IMR-90 (cell line): ENCODE measurements at regions of chr14 and their contacts with region 1.

Region 1: GRCh38 chr14:104078031-104078455 is 7.5 kb upstream of the ASPG start:
- DNase-seq: peak; percentile 80
- ATAC-seq: peak; percentile 100
- H3K4me3 ChIP-seq: no peak overlapping the region
- H3K27ac ChIP-seq: no peak overlapping the region
- H3K4me1 ChIP-seq: no peaks in the 10 kb centered on the region
- H3K27me3 ChIP-seq: no peaks in the 10 kb centered on the region
- CTCF ChIP-seq: peak; percentile 100
- POLR2A ChIP-seq: no peak
- RAD21 ChIP-seq: peak; percentile 79

Region 2: GRCh38 chr14:103808403-103809001 is 269.5 kb before region 1 on chr14:
- CTCF ChIA-PET with region 1: no interaction called
- POLR2A ChIA-PET with region 1: no interaction called
- dilution Hi-C with region 1: no loop called
- in situ Hi-C with region 1: no loop called
- intact Hi-C with region 1: loop called (anchors 10 kb)
- DNase-seq: peak; percentile 65
- ATAC-seq: peak; percentile 91
- H3K4me3 ChIP-seq: no peak overlapping the region
- H3K27ac ChIP-seq: no peak overlapping the region
- H3K4me1 ChIP-seq: peaks cover 2% of the 10 kb centered on the region; the same call in 1 of the 2 replicates
- H3K27me3 ChIP-seq: no peaks in the 10 kb centered on the region
- CTCF ChIP-seq: peak; percentile 80
- POLR2A ChIP-seq: 0 out of 2 replicates have a peak, but pooled peaks have one; percentile 32
- RAD21 ChIP-seq: peak; percentile 86

Region 3: GRCh38 chr14:103832046-103832445 is 246.0 kb before region 1 on chr14:
- CTCF ChIA-PET with region 1: interaction called, 5 read pairs
- POLR2A ChIA-PET with region 1: interaction called, 12 read pairs
- dilution Hi-C with region 1: no loop called
- in situ Hi-C with region 1: no loop called
- intact Hi-C with region 1: no loop called
- DNase-seq: no peak
- ATAC-seq: no peak
- H3K4me3 ChIP-seq: no peak overlapping the region
- H3K27ac ChIP-seq: no peak overlapping the region
- H3K4me1 ChIP-seq: no peaks in the 10 kb centered on the region
- H3K27me3 ChIP-seq: no peaks in the 10 kb centered on the region
- CTCF ChIP-seq: no peak
- POLR2A ChIP-seq: no peak
- RAD21 ChIP-seq: no peak

Region 4: GRCh38 chr14:104563742-104564615 is 485.9 kb after region 1 on chr14:
- CTCF ChIA-PET with region 1: interaction called, 4 read pairs
- POLR2A ChIA-PET with region 1: no interaction called
- dilution Hi-C with region 1: no loop called
- in situ Hi-C with region 1: loop called (anchors 25 kb)
- intact Hi-C with region 1: loop called (anchors 1 kb)
- DNase-seq: peak; percentile 34
- ATAC-seq: peak; percentile 92
- H3K4me3 ChIP-seq: no peak overlapping the region
- H3K27ac ChIP-seq: no peak overlapping the region
- H3K4me1 ChIP-seq: no peaks in the 10 kb centered on the region
- H3K27me3 ChIP-seq: peaks cover 2% of the 10 kb centered on the region; the same call in 1 of the 2 replicates
- CTCF ChIP-seq: peak; percentile 63
- POLR2A ChIP-seq: no peak
- RAD21 ChIP-seq: peak; percentile 72

Region 5: DNA sequence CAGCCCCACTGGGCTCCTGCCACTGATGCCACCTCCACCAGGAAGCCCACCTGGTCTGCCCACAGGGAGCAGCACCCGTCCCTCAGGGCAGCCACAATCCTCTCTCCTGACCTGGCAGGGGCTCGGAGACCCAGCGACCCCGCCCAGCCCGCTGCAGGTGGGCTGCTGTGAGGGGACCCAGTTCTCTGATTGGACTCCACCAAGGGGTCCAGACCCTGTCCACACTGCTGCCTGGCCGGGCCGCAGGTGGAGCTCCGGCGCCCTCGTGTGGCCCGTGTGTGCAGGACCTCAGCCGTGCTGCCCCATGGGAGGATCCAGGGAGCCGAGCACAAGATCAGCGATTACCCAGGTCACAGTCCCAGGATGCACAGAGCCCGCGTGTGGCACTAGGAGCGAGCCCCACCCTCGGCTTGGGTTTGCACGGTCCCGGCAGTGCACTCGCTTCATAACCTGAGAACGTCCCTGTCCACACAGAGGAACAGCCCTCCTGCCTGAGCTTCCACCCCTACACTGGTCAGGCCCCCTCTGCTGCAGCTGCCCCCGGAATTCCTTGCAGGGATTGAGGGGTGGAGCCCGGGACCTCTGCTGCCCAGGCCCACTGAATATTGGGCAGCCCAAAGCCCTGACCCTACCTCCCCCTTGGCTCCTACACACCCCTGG is 562.0 kb after region 1 on chr14:
- CTCF ChIA-PET with region 1: interaction called, 3 read pairs
- POLR2A ChIA-PET with region 1: no interaction called
- dilution Hi-C with region 1: no loop called
- in situ Hi-C with region 1: loop called (anchors 25 kb)
- intact Hi-C with region 1: loop called (anchors 1 kb)
- DNase-seq: peak; percentile 24
- ATAC-seq: peak; percentile 97
- H3K4me3 ChIP-seq: no peak overlapping the region
- H3K27ac ChIP-seq: no peak overlapping the region
- H3K4me1 ChIP-seq: no peaks in the 10 kb centered on the region
- H3K27me3 ChIP-seq: peaks cover 22% of the 10 kb centered on the region
- CTCF ChIP-seq: peak; percentile 92
- POLR2A ChIP-seq: no peak
- RAD21 ChIP-seq: peak; percentile 89